ENCODE measurements at regions of chr3 and their contacts with region 1.

Region 1: GRCh38 chr3:115217678-115218451 is 70.8 kb upstream of the ZBTB20 start:
- DNase-seq: peak; percentile 29
- H3K4me3 ChIP-seq: no peak overlapping the region
- H3K27me3 ChIP-seq: no peaks in the 10 kb centered on the region
- CTCF ChIP-seq: peak; percentile 72

Region 2: GRCh38 chr3:115436767-115437301 is 219.0 kb after region 1 on chr3:
- CTCF ChIA-PET with region 1: interaction called, 18 read pairs
- POLR2A ChIA-PET with region 1: no interaction called
- DNase-seq: peak; percentile 74
- H3K4me3 ChIP-seq: no peak overlapping the region
- H3K27me3 ChIP-seq: no peaks in the 10 kb centered on the region
- CTCF ChIP-seq: peak; percentile 61

Region 3: DNA sequence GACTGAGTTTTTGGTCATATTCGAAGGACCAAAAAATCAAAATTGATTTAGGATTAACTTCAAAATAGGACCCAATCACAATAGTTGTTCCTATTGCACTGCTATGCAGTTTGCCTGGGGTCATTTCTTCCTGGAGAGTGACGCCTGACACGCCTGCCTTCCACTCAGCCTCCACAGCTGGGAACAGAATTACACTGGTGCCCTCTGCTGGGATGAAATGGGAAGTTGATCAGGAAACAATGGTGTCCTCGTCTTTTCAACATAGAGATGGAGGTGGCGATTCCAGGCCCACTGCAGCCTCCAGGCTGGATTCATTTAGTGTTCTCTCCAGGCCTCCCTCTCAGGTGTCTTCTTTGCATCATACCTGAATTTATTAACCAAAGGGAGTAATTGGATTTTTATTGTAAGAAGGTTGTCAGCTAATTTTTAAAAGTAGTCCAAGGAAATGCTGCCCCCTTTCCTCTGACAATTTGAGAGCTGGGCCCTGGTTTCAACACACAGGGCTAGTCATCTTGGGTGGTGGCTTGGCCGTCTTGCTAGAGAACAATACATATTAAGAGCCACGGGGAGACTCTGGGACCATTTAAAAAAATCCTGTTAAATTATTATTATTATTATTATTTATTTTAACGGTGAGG is 475.1 kb after region 1 on chr3:
- CTCF ChIA-PET with region 1: interaction called, 43 read pairs
- POLR2A ChIA-PET with region 1: no interaction called
- DNase-seq: no peak
- H3K4me3 ChIP-seq: no peak overlapping the region
- H3K27me3 ChIP-seq: no peaks in the 10 kb centered on the region
- CTCF ChIP-seq: peak; percentile 77

Region 4: DNA sequence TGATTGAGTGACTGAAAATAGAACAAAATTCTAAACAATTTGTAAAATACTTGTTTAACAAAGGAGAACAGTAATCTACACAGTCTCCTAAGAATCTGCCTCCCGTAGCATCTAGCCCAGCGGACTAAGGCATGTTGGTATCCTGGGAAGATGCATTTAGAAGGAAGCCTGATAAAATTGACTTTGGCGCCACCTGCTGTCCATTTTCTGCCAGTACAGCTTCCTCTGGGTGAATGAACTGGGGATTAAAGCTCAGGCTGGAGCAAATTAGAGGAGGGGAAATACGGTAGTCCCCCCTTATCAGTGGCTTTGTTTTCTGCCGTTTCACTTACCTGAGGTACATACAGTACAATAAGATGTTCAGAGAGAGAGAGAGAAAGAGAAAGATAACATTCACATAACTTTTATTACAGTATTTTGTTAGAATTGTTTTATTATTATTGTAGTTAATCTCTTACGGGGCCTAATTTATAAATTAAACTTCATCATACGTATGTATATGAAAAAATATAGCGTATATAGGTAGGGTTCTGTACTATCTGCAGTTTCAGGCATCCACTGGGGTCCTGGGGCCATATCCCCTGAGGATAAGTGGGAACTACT is 597.0 kb after region 1 on chr3:
- CTCF ChIA-PET with region 1: interaction called, 12 read pairs
- POLR2A ChIA-PET with region 1: no interaction called
- DNase-seq: no peak
- H3K4me3 ChIP-seq: no peak overlapping the region
- H3K27me3 ChIP-seq: no peaks in the 10 kb centered on the region
- CTCF ChIP-seq: peak; percentile 81

Region 5: DNA sequence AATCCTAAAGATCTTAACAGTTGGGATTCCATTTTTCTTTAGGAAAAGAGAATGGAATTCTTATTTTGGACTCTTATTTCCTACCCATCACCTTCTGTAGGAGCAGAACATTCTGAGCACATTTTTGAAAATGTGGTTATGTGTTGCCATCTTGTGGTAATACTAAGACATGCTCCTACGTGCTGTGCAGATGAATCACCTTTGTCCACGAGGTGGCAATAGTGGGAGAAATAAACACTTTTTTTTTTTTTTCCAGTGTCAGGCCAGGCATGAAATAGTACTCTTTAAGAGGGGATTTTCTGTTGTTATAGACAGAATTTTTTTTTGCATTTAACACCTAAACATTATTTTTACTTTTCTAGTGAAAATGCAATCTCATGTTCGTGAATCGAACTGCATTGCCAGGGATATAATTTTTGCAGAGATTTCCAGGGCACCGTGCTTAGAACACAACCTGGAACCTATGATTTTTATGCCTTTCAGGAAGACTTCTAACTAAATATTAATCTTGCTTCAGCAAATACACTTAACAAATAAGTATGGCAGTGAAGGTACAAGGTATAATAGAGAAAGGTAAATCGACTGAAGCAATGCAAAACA is 602.0 kb after region 1 on chr3:
- CTCF ChIA-PET with region 1: interaction called, 12 read pairs
- POLR2A ChIA-PET with region 1: no interaction called
- DNase-seq: peak; percentile 46
- H3K4me3 ChIP-seq: no peak overlapping the region
- H3K27me3 ChIP-seq: no peaks in the 10 kb centered on the region
- CTCF ChIP-seq: peak; percentile 90